Activated T-helper 1 cell treated with anti-CD3 and anti-CD28 coated beads, Interleukin-12 subunit alpha, Interleukin-12 subunit beta, Interleukin-2, Interleukin-4 antibody, amounts not matched to agents 30 ng/mL and 10 ng/mL and 1 ng/mL, durations not matched to agents 14 hours and 24 hours and 36 hours (primary cell): ENCODE measurements at regions of chr4 and their contacts with region 1.

Region 1: DNA sequence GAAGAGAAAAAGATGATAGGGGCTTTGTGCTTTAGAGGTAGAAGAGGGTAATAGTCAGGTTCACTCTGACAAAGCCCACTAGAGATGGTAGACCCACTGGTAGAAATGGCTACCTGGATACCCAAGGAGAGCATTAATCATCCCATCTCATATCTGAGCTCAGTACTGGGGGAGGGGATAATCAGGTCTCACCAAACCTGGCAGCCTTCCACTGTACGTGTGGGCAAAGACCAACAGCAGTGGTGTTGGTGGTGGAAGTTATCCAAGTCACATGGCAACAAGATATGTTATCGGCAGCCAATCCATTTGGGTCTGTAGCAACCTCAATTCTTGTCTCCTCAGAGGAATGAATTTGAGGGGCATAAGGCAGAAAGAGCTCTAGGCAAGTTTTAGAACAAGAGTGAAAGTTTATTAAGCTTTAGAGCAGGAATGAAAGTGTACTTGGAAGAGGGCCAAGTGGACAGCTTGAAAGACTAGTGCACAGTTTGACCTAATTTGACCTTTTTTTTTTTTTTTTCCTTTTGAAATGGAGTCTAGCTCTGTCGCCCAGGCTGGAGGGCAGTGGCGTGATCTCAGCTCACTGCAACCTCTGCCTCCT is 67.0 kb upstream of the CXCL13 start:
- DNase-seq: no peak
- H3K4me3 Mint-ChIP-seq: peak overlapping the region; percentile 20
- H3K27ac Mint-ChIP-seq: peak overlapping the region; percentile 88
- H3K4me1 Mint-ChIP-seq: peaks cover 40% of the 10 kb centered on the region
- H3K27me3 Mint-ChIP-seq: peaks cover 5% of the 10 kb centered on the region

Region 2: GRCh38 chr4:77465271-77465670 is 73.4 kb before region 1 on chr4:
- intact Hi-C with region 1: loop called (anchors 5 kb)
- DNase-seq: no peak
- H3K4me3 Mint-ChIP-seq: no peak overlapping the region
- H3K27ac Mint-ChIP-seq: peak overlapping the region; percentile 5
- H3K4me1 Mint-ChIP-seq: peaks cover 7% of the 10 kb centered on the region
- H3K27me3 Mint-ChIP-seq: peaks cover 12% of the 10 kb centered on the region

Region 3: DNA sequence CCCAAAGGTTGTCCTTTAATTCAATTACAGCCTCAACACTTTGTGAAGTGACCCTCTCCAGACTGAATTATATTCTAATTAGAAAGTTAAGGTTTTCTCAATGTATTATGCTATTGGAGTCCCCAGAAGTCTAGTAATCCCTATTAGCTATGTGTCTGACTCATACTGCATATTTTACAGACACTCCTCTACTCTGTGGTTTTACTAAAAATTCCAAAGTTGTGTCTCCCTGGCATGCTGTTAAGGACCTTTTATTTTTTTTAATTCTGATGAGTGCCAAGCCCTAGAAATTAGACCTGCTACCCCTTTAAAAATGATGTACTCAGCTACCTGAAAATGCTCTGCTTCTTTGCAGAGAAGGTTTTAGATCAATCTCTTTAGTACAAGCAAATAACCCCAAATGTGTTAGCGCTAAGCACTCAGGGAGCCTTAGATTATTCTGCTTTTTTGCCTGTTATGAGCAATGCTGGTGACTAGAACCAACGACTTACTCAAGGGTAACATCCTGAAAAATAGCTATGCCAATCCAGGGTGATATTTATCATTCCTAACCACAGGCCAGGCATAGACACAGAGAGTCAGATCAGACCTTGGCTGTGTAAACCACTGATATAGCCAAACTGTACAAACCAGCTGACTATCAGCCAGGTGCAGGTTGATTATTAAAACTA is 40.9 kb after region 1 on chr4:
- intact Hi-C with region 1: loop called (anchors 1 kb)
- DNase-seq: no peak
- H3K4me3 Mint-ChIP-seq: no peak overlapping the region
- H3K27ac Mint-ChIP-seq: peak overlapping the region; percentile 72
- H3K4me1 Mint-ChIP-seq: peaks cover 40% of the 10 kb centered on the region
- H3K27me3 Mint-ChIP-seq: no peaks in the 10 kb centered on the region

Region 4: GRCh38 chr4:77629885-77630284 is 91.2 kb after region 1 on chr4:
- intact Hi-C with region 1: loop called (anchors 1 kb)
- DNase-seq: no peak
- H3K4me3 Mint-ChIP-seq: no peak overlapping the region
- H3K27ac Mint-ChIP-seq: peak overlapping the region; percentile 12
- H3K4me1 Mint-ChIP-seq: peaks cover 22% of the 10 kb centered on the region
- H3K27me3 Mint-ChIP-seq: no peaks in the 10 kb centered on the region